Heart right ventricle (tissue), 16 donors: ENCODE measurements at regions of chr2 and their contacts with region 1.

Region 1: DNA sequence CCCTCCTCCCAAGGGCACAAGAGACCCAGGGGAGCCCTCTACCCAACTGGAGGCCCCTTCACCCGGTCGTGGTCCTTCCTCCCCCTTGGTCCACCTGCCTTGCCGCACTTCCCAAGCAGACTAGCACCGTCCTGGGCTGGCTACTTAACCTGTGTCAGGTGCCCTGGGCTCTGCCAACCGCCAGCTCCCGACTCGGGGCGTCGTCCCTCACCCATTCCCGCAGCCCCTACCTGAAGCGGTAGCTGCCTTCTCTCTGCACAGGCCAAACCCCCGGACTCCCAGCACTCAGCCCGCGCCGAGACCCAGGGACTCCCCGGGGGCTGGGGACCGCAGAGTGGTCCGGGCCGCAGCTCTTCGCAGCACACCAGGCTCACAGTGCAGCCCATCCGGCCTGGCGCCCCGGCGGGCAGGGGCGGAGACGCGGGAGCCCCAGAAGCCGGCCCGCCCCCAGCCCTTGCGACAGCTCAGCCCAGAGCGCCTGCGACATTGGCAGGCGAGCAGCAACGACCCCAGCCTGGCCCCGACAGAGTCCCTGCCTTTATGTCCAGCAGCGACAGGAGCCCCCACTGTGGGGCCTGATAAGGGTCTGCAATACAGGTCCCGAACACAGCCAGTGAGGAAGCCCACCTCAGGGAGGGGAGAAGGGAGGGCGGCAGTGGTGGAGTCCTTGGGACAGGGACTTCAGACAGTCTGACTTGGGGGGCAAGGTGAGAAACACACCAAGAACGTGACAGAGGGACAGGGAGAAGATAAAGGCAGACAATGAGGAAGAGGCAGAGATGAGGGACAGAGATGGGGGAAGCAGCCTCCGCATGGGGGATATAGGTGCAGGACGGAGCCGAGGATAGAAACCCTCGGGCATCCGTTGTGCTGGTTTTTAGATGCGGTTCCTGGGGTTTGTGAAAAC is 31.0 kb upstream of the TNS1 start:
- DNase-seq: no peak
- ATAC-seq: peak in 2 of 8 donors; percentile 3 to 18
- H3K4me3 ChIP-seq: peak overlapping the region in 5 of 10 donors; percentile 14 to 45 (median 33)
- H3K27ac ChIP-seq: peak overlapping the region in 1 of 10 donors; percentile 76
- H3K4me1 ChIP-seq: peaks cover 7 to 30% (median 23%) of the 10 kb centered on the region in 9 donors
- H3K27me3 ChIP-seq: peaks cover 0 to 11% (median 0%) of the 10 kb centered on the region in 7 donors
- CTCF ChIP-seq: no peak

Region 2: DNA sequence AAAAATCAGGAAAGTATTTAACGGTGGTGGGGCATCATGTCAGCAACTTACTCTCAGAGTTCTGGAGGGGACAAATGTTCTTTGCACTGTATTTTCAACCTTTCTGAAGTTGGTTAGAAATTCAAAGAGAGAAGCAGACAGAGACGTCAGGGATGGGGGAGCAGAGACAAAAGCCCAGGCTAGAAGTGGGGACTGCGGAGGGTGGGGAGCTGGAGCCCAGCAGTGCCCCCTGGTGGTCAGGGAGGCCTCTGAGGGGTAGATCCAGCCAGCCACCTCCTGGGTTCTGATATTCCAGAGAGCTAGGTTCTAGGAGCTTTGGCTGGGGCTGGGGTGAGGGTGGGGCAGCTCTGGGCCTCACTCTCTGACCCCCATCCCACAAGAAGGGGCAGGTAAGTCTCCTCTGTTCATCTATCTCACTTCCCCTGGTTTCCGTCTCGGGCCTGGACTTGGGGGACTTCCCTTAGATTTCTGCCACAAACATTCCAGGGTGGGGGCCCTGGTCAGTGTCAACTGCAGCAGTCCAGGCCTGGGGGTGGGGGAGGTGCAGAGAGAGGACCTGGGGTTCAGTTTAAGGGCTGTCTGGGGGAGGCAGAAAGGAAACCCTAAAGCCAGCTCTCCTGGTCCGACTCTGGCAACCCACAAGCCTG is 39.9 kb before region 1 on chr2:
- intact Hi-C with region 1: loop called in 9 of 10 experiments (anchors 2 to 5 kb)
- DNase-seq: peak; percentile 71 to 78
- ATAC-seq: peak in 7 of 8 donors; percentile 36 to 75 (median 55)
- H3K4me3 ChIP-seq: no peak overlapping the region
- H3K27ac ChIP-seq: peak overlapping the region in 5 of 10 donors; percentile 10 to 52 (median 22)
- H3K4me1 ChIP-seq: peaks cover 12 to 48% (median 28%) of the 10 kb centered on the region in 9 donors
- H3K27me3 ChIP-seq: no peaks in the 10 kb centered on the region
- CTCF ChIP-seq: peak; percentile 68 to 85 (median 80)

Region 3: DNA sequence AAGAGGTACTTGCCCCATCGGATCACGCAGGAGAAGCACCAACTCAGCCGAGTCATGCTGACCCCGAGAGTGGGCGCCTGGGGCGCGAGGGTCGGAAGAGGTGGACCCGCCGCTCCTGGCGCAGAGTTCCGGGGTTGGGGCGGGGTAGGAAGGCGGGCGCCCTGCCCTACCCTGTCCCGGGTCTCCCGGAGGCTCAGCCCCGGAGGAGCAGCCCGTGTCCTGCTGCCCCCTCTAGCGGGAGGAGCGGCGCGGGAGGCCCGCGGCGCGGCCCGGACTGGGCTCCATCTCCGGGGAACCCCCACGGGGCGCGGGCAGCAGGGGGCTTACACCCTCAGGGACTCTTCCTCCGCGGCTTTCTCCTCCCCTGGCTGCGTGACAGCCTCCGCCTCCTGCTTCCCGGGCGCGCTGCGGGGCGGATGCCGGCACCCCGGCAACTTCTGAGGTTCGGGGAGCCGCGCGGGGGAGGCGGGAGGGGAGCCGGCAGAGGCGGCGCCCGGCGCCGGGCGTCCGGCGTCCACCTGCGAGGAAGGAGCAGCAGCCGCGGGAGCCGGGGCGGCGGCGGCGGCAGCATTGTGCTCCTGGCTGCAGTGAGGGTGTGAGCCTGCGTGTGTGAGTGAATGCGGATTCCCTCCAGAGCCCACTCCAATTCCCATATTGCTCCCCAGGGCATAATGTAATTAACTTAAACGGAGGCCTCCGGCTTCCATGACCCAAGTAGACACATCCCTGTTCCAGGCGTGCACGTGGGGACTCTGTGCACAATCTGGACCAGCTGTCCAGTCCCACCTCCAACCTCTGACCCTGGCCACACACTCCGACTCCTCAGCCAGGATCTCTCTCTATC is 23.5 kb before region 1 on chr2:
- intact Hi-C with region 1: loop called in 1 of 10 experiments (anchors 2 kb)
- DNase-seq: peak in 1 of 2 donors; percentile 68
- ATAC-seq: peak; percentile 69 to 86 (median 80)
- H3K4me3 ChIP-seq: peak overlapping the region; percentile 35 to 60 (median 58)
- H3K27ac ChIP-seq: peak overlapping the region in 3 of 10 donors; percentile 13 to 47 (median 36)
- H3K4me1 ChIP-seq: peaks cover 7 to 42% (median 25%) of the 10 kb centered on the region in 9 donors
- H3K27me3 ChIP-seq: peaks cover 0 to 31% (median 0%) of the 10 kb centered on the region in 7 donors
- CTCF ChIP-seq: peak; percentile 28 to 79 (median 55)

Region 4: DNA sequence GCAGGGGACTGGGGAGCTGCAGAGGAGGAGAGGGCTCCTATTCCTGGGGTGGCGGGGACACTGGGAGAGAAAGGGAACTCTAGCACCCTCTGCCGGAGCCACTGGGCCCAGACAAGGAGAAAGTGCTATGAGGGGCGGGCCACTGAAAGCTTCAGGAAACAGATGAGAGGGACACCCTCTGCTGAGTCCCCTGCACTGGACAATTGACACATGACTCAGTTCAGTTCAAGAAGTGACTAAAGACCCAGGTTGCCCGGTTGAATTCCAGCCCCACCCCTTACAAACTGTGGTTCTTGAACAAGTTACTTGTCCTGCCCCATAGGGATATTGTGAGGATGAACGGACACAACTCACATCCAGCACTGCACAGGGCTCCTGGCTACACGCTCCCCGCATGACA is 40.2 kb after region 1 on chr2:
- intact Hi-C with region 1: no loop called
- DNase-seq: no peak
- ATAC-seq: peak in 5 of 8 donors; percentile 29 to 63 (median 50)
- H3K4me3 ChIP-seq: no peak overlapping the region
- H3K27ac ChIP-seq: no peak overlapping the region
- H3K4me1 ChIP-seq: no peaks in the 10 kb centered on the region
- H3K27me3 ChIP-seq: peaks cover 0 to 7% (median 0%) of the 10 kb centered on the region in 7 donors
- CTCF ChIP-seq: peak in 8 of 9 donors; percentile 12 to 58 (median 45)